Left cardiac atrium (tissue), 4 donors: ENCODE measurements at regions of chr16 and their contacts with region 1.

Region 1: DNA sequence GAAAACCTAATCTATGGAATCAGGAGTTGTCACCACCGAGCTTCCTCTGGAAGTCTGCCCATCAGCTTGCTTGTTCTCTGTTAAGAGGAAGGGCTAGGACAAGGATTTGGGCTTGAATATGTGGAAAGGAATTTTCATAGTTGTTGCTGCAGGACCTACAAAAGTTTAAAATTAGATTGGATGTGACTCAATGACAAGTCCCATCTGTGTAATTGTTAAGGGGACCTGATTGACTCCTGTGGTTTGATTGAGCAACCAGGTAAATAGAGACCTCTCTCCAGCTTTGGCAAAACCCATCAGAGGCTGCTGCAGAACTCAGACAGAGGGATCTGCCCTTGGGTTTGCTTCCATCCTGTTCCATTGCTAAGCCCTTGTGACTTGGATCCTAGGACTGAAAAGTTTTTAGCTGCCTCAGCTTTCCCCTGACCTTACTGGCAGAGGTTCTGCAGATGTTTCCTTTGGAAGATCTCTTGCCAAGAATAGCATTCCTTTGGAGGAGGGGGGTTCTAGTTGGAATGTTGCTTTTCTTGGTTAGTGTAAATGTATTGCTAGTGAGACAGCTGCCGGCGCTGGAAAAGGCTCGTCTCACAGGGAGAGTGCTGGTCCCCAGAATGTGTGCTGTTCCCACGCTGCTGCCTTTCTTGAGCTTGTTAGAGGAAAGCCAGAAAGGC is 50.0 kb downstream of the SF3B3 start:
- DNase-seq: peak; percentile 47
- ATAC-seq: peak; percentile 66 to 78

Region 2: DNA sequence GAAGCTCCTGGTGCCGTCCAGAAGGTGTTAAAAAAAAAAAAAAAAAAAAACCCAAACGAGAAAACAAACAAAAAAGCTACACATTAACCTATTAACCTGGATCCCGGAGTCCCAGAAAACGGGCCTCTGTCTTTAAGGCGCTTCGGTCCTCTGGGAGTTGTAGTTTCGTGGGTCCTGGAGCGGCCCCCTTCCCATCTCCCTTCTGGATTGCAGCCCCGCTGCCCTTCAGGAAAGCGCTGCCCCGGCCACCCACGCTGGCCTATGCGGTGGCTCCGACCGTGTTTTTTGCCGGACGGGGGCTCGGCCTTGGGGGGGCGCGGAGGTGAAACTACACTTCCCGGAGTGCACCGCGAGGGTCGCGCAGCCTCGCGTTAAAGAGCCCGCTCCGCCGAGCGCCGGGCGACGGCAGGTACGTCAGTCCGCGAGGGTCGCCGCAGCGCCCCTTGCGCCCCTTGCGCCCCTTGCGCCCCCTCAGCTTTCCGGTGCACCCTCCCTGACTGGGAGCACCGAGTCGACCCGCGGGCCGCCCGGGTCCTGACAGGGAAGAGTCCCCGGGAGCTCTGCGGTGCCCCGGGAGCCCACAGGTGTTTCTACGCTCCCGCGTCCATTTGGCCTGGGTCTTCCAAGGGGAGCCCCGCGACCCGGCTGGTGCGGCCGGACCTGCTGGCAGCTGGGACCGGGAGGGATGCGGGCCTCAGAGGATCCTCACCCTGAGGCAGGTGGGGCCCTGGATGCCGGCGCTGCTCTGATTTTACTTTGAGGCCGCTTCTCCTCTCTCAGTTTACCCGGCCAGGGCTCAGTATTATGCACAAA is 119.2 kb before region 1 on chr16 and contains the start of gene FCSK:
- intact Hi-C with region 1: no loop called
- DNase-seq: peak; percentile 74
- ATAC-seq: peak; percentile 94 to 96
- total RNA-seq, gene FCSK: 9.5 to 11.4 TPM

Region 3: GRCh38 chr16:70529051-70529777 is 44.4 kb before region 1 on chr16:
- intact Hi-C with region 1: loop called in 1 of 2 experiments (anchors 5 kb)
- DNase-seq: no peak
- ATAC-seq: peak in 1 of 2 donors; percentile 30